Mammary epithelial cell (primary cell): ENCODE measurements at regions of chr4 and their contacts with region 1.

Region 1: GRCh38 chr4:158094413-158095134 is 78.3 kb downstream of the GASK1B start:
- DNase-seq: peak; percentile 93
- H3K4me3 ChIP-seq: peak overlapping the region in 2 of 3 experiments; percentile 9 to 23
- H3K27ac ChIP-seq: peak overlapping the region; percentile 74
- H3K4me1 ChIP-seq: peaks cover 25% of the 10 kb centered on the region
- H3K27me3 ChIP-seq: no peaks in the 10 kb centered on the region
- CTCF ChIP-seq: no peak

Region 2: DNA sequence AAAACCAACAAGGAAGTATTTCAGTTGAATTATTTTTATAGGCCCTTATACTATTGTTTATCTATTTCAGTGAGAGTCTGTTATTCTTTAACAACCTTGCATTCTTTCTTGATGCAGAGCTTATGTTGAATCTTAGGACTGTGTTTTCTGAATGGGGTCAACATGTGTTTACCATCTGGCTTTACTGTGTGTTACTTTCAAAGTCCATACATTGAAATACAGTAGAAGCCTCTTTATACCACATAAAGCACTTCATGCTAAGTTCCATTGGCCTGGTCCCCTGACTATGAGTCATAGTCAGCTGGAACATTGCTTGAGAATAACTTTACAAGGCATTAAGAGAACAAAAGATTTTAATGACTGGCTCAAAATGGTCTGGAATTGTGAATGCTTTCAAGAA is 74.4 kb before region 1 on chr4:
- CTCF ChIA-PET with region 1: interaction called, 3 read pairs
- dilution Hi-C with region 1: no loop called
- in situ Hi-C with region 1: no loop called
- intact Hi-C with region 1: loop called (anchors 10 kb)
- DNase-seq: peak; percentile 82
- H3K4me3 ChIP-seq: peak overlapping the region in 1 of 3 experiments; percentile 18
- H3K27ac ChIP-seq: peak overlapping the region; percentile 50
- H3K4me1 ChIP-seq: peaks cover 39% of the 10 kb centered on the region
- H3K27me3 ChIP-seq: no peaks in the 10 kb centered on the region
- CTCF ChIP-seq: no peak